H1 (cell line): ENCODE measurements at regions of chr9 and their contacts with region 1.

Region 1: DNA sequence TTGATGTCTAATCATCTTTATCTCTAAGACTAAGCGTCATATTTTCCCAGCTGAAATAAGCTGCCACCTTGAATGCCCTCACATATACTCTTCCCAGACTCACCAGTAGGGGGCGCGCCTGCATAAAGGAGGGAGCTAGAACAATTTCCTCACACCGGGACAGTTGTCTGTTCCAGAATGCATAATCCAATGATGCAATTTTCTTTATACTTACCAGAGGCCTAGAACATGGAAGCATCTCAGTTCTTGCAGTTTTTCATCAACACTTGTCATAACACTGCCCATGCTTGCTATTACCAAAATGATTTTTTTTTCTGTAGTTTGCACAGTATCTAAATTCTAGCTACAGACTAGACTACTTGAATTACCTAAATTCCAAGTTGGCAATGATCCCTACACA is 203.9 kb downstream of the FRMD3 start:
- DNase-seq: peak in 1 of 2 experiments; percentile 88
- H3K4me3 ChIP-seq: no peak overlapping the region
- H3K27ac ChIP-seq: no peak overlapping the region
- H3K4me1 ChIP-seq: no peaks in the 10 kb centered on the region
- H3K27me3 ChIP-seq: no peaks in the 10 kb centered on the region
- CTCF ChIP-seq: peak; percentile 66 to 94 (median 88)
- EP300 ChIP-seq: no peak
- POLR2A ChIP-seq: no peak
- RAD21 ChIP-seq: peak; percentile 94 to 95

Region 2: GRCh38 chr9:83062656-83063527 is 271.4 kb before region 1 on chr9 and contains the start of gene RASEF:
- CTCF ChIA-PET with region 1: no interaction called
- POLR2A ChIA-PET with region 1: no interaction called
- DNase-seq: peak; percentile 46 to 84
- H3K4me3 ChIP-seq: peak within 1 kb of the TSS; percentile 42 to 60 (median 49)
- H3K27ac ChIP-seq: no peak within 1 kb of the TSS
- H3K4me1 ChIP-seq: peaks cover 0 to 4% (median 0%) of the 10 kb centered on the region in 4 experiments; a peak in 1 of 7 replicates
- H3K27me3 ChIP-seq: peaks cover 0 to 35% (median 14%) of the 10 kb centered on the region in 4 experiments; a peak in 6 of 7 replicates
- CTCF ChIP-seq: peak in 2 of 3 experiments; percentile 6 to 8; a peak in 1 of 4 replicates
- EP300 ChIP-seq: no peak
- POLR2A ChIP-seq: no peak; a peak in 1 of 3 replicates
- RAD21 ChIP-seq: peak; percentile 4 to 6; a peak in 1 of 4 replicates
- total RNA-seq, gene RASEF: 4.3 and 4.6 TPM in 2 replicates

Region 3: GRCh38 chr9:83304686-83305085 is 29.6 kb before region 1 on chr9:
- CTCF ChIA-PET with region 1: interaction called, 12 read pairs
- POLR2A ChIA-PET with region 1: no interaction called
- DNase-seq: no peak
- H3K4me3 ChIP-seq: no peak overlapping the region
- H3K27ac ChIP-seq: no peak overlapping the region
- H3K4me1 ChIP-seq: peaks cover 0 to 7% (median 0%) of the 10 kb centered on the region in 4 experiments; a peak in 1 of 7 replicates
- H3K27me3 ChIP-seq: no peaks in the 10 kb centered on the region
- CTCF ChIP-seq: no peak
- EP300 ChIP-seq: no peak
- POLR2A ChIP-seq: no peak
- RAD21 ChIP-seq: no peak

Region 4: GRCh38 chr9:83355024-83355444 is 20.7 kb after region 1 on chr9:
- CTCF ChIA-PET with region 1: interaction called, 92 read pairs
- POLR2A ChIA-PET with region 1: no interaction called
- DNase-seq: no peak
- H3K4me3 ChIP-seq: no peak overlapping the region
- H3K27ac ChIP-seq: no peak overlapping the region
- H3K4me1 ChIP-seq: no peaks in the 10 kb centered on the region
- H3K27me3 ChIP-seq: no peaks in the 10 kb centered on the region
- CTCF ChIP-seq: no peak
- EP300 ChIP-seq: no peak
- POLR2A ChIP-seq: no peak
- RAD21 ChIP-seq: no peak

Region 5: GRCh38 chr9:83505282-83505681 is 171.0 kb after region 1 on chr9:
- CTCF ChIA-PET with region 1: interaction called, 12 read pairs
- POLR2A ChIA-PET with region 1: no interaction called
- DNase-seq: no peak
- H3K4me3 ChIP-seq: no peak overlapping the region
- H3K27ac ChIP-seq: no peak overlapping the region
- H3K4me1 ChIP-seq: no peaks in the 10 kb centered on the region; a peak in 1 of 7 replicates
- H3K27me3 ChIP-seq: no peaks in the 10 kb centered on the region
- CTCF ChIP-seq: no peak
- EP300 ChIP-seq: no peak
- POLR2A ChIP-seq: no peak
- RAD21 ChIP-seq: no peak

Region 6: DNA sequence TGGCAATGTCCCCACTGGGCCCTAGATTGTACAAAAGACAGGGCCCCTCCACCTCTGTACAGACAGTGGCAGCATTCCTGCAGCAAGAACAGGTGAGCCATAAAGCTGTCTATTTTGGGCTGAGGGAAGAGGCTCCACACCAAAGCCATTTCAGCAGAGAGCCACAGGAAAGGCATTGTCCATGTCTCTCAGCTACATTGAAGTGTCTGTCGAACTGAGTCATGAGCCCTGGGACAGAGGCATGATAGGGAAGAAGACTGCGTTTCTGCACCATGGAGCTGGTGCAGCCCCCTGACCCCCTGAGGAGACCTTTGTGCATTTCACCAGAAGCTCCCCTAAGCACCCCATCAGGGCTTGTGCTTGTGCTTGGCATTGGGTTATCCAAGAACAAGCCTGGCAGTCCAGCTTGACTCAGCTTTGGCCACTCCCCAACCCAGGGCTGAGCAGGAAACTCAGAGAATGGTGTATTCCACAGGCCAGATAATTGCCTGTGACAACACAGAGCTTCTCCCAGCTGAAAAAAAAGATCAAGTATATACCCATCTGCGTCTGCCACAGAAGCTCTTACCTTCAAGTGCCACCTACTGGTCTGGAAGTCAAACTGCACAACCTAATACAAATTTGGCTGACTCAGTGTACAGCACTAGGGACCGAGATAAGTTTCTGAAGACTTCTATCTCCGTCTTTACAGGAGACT is 209.8 kb after region 1 on chr9:
- CTCF ChIA-PET with region 1: interaction called, 262 read pairs
- POLR2A ChIA-PET with region 1: no interaction called
- DNase-seq: no peak
- H3K4me3 ChIP-seq: no peak overlapping the region
- H3K27ac ChIP-seq: no peak overlapping the region
- H3K4me1 ChIP-seq: no peaks in the 10 kb centered on the region
- H3K27me3 ChIP-seq: peaks cover 6 to 21% (median 16%) of the 10 kb centered on the region in 4 experiments
- CTCF ChIP-seq: peak in 2 of 3 experiments; percentile 79 to 82; a peak in 3 of 4 replicates
- EP300 ChIP-seq: no peak
- POLR2A ChIP-seq: no peak
- RAD21 ChIP-seq: peak; percentile 86 to 91

Region 7: DNA sequence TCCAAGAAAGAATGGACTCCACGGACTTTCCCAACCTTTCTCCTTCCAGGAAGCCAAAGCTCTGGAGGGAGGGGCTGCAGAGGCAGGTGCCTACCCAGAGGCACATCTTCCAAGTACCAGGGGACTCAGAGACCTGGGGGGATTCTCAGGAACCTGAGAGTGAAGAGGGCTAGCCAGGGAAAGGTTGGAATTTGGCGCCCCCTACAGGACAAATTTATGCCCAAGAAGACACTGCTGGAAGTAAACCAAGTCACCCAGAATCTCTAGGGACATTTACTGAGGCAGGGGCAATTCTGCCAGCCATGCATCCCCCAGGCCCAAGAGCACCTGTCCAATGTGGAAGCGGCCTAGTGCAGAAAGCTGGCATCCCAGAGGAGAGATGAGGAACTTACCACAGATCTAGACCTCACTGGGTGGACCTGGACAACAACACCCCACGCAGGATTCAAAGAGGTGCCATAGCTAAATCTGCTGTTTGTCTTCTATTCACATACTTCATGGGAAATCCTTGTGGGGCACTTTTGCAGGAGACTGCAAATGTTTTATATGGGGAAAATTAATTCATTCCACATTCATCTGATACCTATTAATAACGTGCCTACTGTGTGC is 262.7 kb after region 1 on chr9:
- CTCF ChIA-PET with region 1: interaction called, 58 read pairs
- POLR2A ChIA-PET with region 1: interaction called, 4 read pairs
- DNase-seq: peak in 1 of 2 experiments; percentile 87
- H3K4me3 ChIP-seq: no peak overlapping the region
- H3K27ac ChIP-seq: no peak overlapping the region
- H3K4me1 ChIP-seq: no peaks in the 10 kb centered on the region
- H3K27me3 ChIP-seq: no peaks in the 10 kb centered on the region
- CTCF ChIP-seq: peak; percentile 43 to 76 (median 71)
- EP300 ChIP-seq: no peak
- POLR2A ChIP-seq: no peak
- RAD21 ChIP-seq: peak; percentile 83 to 89